ENCODE measurements at regions of chr3 and their contacts with region 1.

Region 1: DNA sequence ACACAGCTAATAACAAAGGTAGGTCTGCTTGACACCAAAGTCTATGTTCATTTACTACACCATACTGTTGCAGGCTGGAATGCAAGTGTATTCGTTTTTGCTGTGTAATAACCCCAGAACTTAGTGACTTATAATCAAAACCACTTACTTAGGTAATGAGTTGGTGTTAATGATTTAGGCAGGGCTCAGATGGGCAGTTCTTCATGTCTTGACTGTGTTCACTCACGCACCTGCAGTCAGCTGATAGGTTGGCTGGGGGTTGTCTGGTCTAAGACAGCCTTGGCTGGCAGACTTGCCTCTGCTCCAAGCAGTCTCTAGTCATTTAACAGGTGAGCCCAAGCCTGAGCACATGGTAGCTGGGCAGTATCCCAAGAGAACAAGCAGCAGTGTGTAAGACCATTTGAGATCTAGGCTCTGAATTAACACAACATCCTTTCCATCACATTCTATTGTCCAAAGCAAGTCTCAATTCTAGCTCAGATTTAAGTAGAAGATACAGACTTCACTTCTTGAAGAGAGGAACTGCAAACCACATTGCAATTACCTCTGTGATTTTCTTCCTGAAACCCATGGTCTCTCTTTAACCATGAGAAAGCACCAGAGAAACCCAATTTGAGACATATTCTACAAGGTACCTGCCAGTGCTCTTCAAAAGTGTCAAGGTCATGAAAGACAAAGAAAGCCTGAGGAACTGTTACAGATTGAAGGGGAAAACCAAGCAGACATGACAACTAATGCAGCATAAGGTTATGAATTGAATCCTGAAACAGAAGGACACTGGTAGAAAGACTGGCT is 13.3 kb upstream of the DCLK3 start:
- DNase-seq: no peak
- ATAC-seq: no peak
- H3K4me3 ChIP-seq: no peak overlapping the region
- H3K4me3 Mint-ChIP-seq: no peak overlapping the region
- H3K27ac ChIP-seq: no peak overlapping the region
- H3K27ac Mint-ChIP-seq: no peak overlapping the region
- H3K4me1 ChIP-seq: no peaks in the 10 kb centered on the region
- H3K4me1 Mint-ChIP-seq: no peaks in the 10 kb centered on the region
- H3K27me3 ChIP-seq: peaks cover 0 to 2% of the 10 kb centered on the region in 2 experiments
- H3K27me3 Mint-ChIP-seq: peaks cover 2% of the 10 kb centered on the region
- CTCF ChIP-seq: no peak

Region 2: GRCh38 chr3:36488077-36488789 is 289.4 kb before region 1 on chr3:
- CTCF ChIA-PET with region 1: no interaction called
- POLR2A ChIA-PET with region 1: no interaction called
- intact Hi-C with region 1: no loop called
- DNase-seq: no peak
- ATAC-seq: no peak
- H3K4me3 ChIP-seq: no peak overlapping the region
- H3K4me3 Mint-ChIP-seq: no peak overlapping the region
- H3K27ac ChIP-seq: no peak overlapping the region
- H3K27ac Mint-ChIP-seq: no peak overlapping the region
- H3K4me1 ChIP-seq: no peaks in the 10 kb centered on the region
- H3K4me1 Mint-ChIP-seq: no peaks in the 10 kb centered on the region
- H3K27me3 ChIP-seq: no peaks in the 10 kb centered on the region
- H3K27me3 Mint-ChIP-seq: no peaks in the 10 kb centered on the region
- CTCF ChIP-seq: no peak

Region 3: DNA sequence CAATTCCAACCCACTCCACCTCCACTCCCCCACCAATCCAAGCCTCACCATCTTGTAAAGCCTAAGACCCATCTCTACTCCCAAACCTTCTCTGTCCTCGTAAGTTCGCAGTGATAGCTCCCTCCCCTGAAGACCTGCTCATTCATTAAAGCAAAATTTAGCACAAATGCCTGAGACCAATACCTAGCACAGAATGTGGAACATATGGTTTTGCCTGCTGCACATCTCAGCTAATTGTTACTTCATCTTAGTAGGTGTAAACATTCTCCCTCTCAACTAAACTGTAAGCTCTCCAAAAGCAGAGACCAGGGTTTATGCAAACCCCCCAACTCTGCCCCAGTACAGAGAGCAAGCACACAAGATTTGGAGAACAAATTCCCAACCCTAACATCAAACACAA is 33.8 kb before region 1 on chr3:
- CTCF ChIA-PET with region 1: no interaction called
- POLR2A ChIA-PET with region 1: no interaction called
- intact Hi-C with region 1: loop called in 1 of 2 experiments (anchors 1 kb)
- DNase-seq: no peak
- ATAC-seq: no peak
- H3K4me3 ChIP-seq: no peak overlapping the region
- H3K4me3 Mint-ChIP-seq: no peak overlapping the region
- H3K27ac ChIP-seq: no peak overlapping the region
- H3K27ac Mint-ChIP-seq: no peak overlapping the region
- H3K4me1 ChIP-seq: no peaks in the 10 kb centered on the region
- H3K4me1 Mint-ChIP-seq: no peaks in the 10 kb centered on the region
- H3K27me3 ChIP-seq: no peaks in the 10 kb centered on the region
- H3K27me3 Mint-ChIP-seq: no peaks in the 10 kb centered on the region
- CTCF ChIP-seq: no peak

Measured in CD8-positive, alpha-beta T cell (primary cell).